PC-9 (cell line): ENCODE measurements at regions of chr10 and their contacts with region 1.

Region 1: DNA sequence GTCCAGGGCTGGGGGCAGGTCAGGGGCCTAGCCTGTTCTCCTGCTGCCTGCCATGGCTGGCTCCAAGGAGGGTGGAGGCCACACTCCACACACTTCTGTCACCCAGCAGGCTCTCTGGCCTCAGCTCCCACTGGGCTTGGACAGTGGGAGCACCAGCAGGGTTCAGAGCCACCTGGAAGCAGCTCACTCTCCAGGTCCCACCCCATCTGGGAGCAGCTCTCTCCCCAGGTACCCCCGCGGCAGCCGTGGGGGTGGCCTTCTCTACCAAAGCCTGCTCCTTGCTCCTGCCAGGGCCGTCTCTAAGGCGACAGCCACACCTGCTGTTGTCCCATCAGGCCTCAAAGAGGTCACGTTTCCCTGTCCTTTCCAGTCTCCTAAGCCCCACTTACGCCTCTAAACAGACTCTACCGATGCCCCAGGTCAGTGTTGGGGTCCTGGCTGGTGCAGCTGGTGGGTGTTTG is 142.5 kb upstream of the RET start:
- DNase-seq: no peak
- H3K4me3 ChIP-seq: no peak overlapping the region
- H3K27ac ChIP-seq: no peak overlapping the region
- H3K4me1 ChIP-seq: no peaks in the 10 kb centered on the region
- H3K27me3 ChIP-seq: peaks cover 47% of the 10 kb centered on the region
- CTCF ChIP-seq: no peak

Region 2: DNA sequence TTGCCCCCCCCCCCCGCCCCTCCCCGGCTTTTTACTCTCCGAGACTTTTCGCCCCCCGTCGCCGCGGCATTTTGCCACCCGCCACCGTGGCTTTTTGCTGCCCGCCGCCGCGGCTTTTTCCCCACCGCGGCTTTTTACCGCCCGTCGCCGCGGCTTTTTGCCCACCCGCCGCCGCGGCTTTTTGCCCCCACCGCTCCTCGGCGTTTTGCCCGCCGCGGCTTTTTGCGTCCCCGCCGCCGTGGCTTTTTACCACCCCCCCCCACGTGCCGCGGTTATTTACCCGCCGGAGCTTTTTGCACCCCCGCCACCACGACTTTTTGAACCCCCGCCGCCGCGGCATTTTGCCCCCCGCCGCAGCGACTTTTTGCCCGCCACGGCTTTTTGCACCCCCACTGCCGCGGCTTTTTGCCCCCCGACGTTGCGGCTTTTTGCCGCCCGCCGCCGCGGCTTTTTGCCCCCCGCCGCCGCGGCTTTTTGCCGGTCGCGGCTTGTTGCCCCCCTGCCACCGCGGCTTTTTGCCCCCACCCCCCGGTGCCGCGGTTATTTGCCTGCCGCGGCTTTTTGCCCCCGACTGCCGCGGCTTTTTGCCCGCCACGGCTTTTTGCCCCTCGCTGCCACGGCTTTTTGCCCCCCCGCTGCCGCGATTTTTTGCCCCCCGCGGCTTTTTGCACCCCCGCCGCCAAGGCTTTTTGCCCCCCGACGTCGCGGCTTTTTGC is 757.1 kb before region 1 on chr10:
- CTCF ChIA-PET with region 1: interaction called, 12 read pairs
- POLR2A ChIA-PET with region 1: no interaction called
- intact Hi-C with region 1: no loop called
- DNase-seq: no peak
- H3K4me3 ChIP-seq: no peak overlapping the region
- H3K27ac ChIP-seq: no peak overlapping the region
- H3K4me1 ChIP-seq: no peaks in the 10 kb centered on the region
- H3K27me3 ChIP-seq: no peaks in the 10 kb centered on the region
- CTCF ChIP-seq: no peak

Region 3: GRCh38 chr10:42574336-42574735 is 360.0 kb before region 1 on chr10:
- CTCF ChIA-PET with region 1: no interaction called
- POLR2A ChIA-PET with region 1: no interaction called
- intact Hi-C with region 1: no loop called
- DNase-seq: no peak
- H3K4me3 ChIP-seq: no peak overlapping the region
- H3K27ac ChIP-seq: no peak overlapping the region
- H3K4me1 ChIP-seq: no peaks in the 10 kb centered on the region
- H3K27me3 ChIP-seq: no peaks in the 10 kb centered on the region; the same call in 1 of the 2 replicates
- CTCF ChIP-seq: no peak